Dendritic cell treated with granulocyte-macrophage colony-stimulating factor and Interleukin-4, amounts not matched to agents 40 ng/mL and 50 ng/mL, for 4 days (primary cell): ENCODE measurements at regions of chr14 and their contacts with region 1.

Region 1: GRCh38 chr14:55579724-55580469 is at the start of gene KTN1:
- H3K4me3 Mint-ChIP-seq: peak within 1 kb of the TSS; percentile 92
- H3K27ac Mint-ChIP-seq: peak within 1 kb of the TSS; percentile 93
- H3K4me1 Mint-ChIP-seq: peaks cover 26% of the 10 kb centered on the region
- H3K27me3 Mint-ChIP-seq: peaks cover 1% of the 10 kb centered on the region

Region 2: GRCh38 chr14:55446218-55446654 is 133.7 kb before region 1 on chr14:
- intact Hi-C with region 1: loop called (anchors 1 kb)
- H3K4me3 Mint-ChIP-seq: no peak overlapping the region
- H3K27ac Mint-ChIP-seq: no peak overlapping the region
- H3K4me1 Mint-ChIP-seq: peaks cover 43% of the 10 kb centered on the region
- H3K27me3 Mint-ChIP-seq: peaks cover 1% of the 10 kb centered on the region

Region 3: GRCh38 chr14:55610713-55611370 is 30.9 kb after region 1 on chr14:
- intact Hi-C with region 1: no loop called
- H3K4me3 Mint-ChIP-seq: no peak overlapping the region
- H3K27ac Mint-ChIP-seq: no peak overlapping the region
- H3K4me1 Mint-ChIP-seq: peaks cover 32% of the 10 kb centered on the region
- H3K27me3 Mint-ChIP-seq: no peaks in the 10 kb centered on the region

Region 4: GRCh38 chr14:55671641-55672040 is 91.7 kb after region 1 on chr14:
- intact Hi-C with region 1: no loop called
- H3K4me3 Mint-ChIP-seq: no peak overlapping the region
- H3K27ac Mint-ChIP-seq: no peak overlapping the region
- H3K4me1 Mint-ChIP-seq: no peaks in the 10 kb centered on the region
- H3K27me3 Mint-ChIP-seq: no peaks in the 10 kb centered on the region